GM10248 (cell line): ENCODE measurements at regions of chr4 and their contacts with region 1.

Region 1: DNA sequence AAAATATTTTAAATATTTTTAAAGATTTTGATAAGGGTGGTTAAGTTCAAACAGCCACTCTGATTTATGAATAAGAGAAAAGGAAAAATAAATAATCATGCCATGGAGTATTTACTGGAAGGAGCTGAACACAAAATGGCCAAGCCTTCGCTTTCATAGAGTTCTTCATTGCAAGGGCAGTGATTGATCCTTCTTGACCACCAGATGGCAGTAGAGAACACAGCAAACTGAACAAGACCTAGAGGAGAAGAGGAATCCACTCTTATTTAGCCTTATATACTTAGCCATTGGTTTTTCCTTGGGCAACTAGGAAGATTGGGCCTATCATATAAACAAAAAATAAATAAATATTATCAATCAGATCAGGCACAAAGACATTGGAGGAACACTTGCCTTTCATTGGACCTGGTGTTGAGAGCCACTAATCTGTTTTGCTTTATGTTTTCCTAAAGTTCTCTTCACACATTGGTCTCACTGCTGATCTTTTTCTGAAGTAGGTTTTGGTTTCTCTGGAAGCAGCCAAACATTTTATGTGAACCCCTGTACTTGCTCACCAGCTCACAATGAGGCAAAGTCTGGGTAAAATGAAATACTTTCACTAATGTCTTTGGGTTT is 58.1 kb upstream of the PARM1 start:
- DNase-seq: peak; percentile 38
- CTCF ChIP-seq: peak; percentile 80

Region 2: DNA sequence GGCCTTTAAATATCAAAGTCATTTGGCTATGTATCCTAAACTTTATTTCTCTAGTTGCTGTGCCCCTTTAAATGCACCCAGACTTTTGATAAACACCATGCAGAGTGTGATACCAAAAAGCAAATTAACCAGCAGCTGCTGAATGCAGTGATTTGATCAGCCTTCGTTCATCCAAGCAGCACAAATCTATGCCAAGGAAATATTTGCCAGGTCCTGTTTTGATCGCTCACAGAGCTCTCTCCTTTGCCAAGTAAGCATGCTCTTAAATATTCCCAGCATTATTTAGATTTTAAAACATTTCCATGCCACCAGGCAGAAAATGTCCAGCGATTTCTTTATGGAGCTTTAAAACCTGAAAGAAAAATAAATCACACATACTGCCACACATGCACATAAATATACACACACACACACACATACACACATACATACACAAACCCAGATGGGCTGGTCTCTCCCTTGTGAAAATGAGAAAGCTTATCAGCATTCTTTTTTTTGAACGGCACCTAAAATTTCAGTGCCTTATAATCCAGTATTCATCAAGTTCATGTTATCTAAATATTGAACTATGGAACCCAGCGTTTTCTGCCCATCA is 116.2 kb before region 1 on chr4:
- CTCF ChIA-PET with region 1: no interaction called
- POLR2A ChIA-PET with region 1: no interaction called
- DNase-seq: no peak
- CTCF ChIP-seq: no peak

Region 3: GRCh38 chr4:74886490-74886889 is 11.6 kb after region 1 on chr4:
- CTCF ChIA-PET with region 1: interaction called, 32 read pairs
- POLR2A ChIA-PET with region 1: no interaction called
- DNase-seq: no peak
- CTCF ChIP-seq: no peak

Region 4: GRCh38 chr4:75469896-75470295 is 595.0 kb after region 1 on chr4:
- CTCF ChIA-PET with region 1: interaction called, 19 read pairs
- POLR2A ChIA-PET with region 1: no interaction called
- DNase-seq: no peak
- CTCF ChIP-seq: no peak